HepG2 (cell line): ENCODE measurements at regions of chr20 and their contacts with region 1.

Region 1: GRCh38 chr20:13037727-13038126 is 29.0 kb downstream of the SPTLC3 start:
- DNase-seq: no peak
- ATAC-seq: no peak
- H3K4me3 ChIP-seq: no peak overlapping the region
- H3K27ac ChIP-seq: no peak overlapping the region
- H3K4me1 ChIP-seq: no peaks in the 10 kb centered on the region
- H3K27me3 ChIP-seq: no peaks in the 10 kb centered on the region
- CTCF ChIP-seq: no peak
- EP300 ChIP-seq: no peak
- POLR2A ChIP-seq: no peak
- RAD21 ChIP-seq: no peak

Region 2: DNA sequence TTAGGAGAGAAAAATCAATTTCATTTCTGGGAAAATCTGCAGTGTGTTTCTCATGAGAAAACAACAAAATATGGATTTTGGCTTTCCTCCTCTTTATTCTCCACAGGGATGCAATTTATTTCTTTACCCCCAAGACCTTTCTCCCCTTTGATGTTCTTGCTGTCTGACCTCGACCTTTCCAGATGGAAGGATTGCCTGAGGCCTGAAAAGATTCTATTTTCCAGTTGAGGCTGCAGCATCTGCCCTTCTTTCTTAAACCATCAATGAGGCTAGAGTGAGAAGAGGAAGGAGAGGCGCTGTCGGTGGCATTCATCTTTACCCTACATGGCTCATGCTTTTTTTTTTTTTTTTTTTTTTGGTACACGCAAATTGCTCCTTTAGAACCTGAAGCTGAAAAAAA is 1464.2 kb before region 1 on chr20:
- CTCF ChIA-PET with region 1: no interaction called
- POLR2A ChIA-PET with region 1: no interaction called
- in situ Hi-C with region 1: no loop called
- intact Hi-C with region 1: loop called (anchors 5 kb)
- DNase-seq: no peak
- ATAC-seq: no peak
- H3K4me3 ChIP-seq: no peak overlapping the region
- H3K27ac ChIP-seq: no peak overlapping the region
- H3K4me1 ChIP-seq: no peaks in the 10 kb centered on the region
- H3K27me3 ChIP-seq: no peaks in the 10 kb centered on the region
- CTCF ChIP-seq: no peak
- EP300 ChIP-seq: no peak
- POLR2A ChIP-seq: no peak
- RAD21 ChIP-seq: no peak

Region 3: DNA sequence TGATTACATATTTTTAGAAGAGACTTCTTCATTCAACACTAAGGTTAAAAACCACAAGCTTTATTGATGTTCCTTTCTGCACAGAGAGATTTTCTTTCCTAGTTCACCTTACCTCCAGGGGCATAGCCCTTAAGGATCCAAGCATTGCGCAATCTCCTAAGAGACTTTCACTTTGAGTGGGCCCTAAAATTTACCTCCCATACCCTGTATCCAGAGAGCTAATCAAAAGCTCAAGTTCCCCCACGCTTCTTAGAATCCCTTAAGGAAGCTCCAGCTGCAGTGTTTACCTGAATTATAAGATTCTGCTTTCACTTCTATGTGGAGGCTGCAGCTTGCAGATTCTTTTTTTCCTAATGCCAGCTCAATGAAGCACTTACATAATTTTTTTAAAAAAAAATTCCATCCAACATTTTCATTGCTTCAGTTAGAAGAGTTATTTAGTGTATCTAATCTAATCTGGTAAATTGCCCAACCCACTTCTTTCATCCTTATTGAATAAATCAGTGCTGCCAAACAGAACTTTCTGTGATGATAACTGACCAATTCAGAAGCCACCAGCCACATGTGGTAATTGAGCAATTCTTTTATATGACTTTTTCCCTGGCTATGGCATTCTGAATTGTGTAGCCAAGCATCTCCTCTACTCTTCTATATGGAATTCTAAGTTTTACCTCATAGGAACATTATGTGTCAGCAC is 53.5 kb before region 1 on chr20:
- CTCF ChIA-PET with region 1: no interaction called
- POLR2A ChIA-PET with region 1: no interaction called
- in situ Hi-C with region 1: no loop called
- intact Hi-C with region 1: no loop called
- DNase-seq: no peak
- ATAC-seq: no peak
- H3K4me3 ChIP-seq: no peak overlapping the region
- H3K27ac ChIP-seq: no peak overlapping the region
- H3K4me1 ChIP-seq: peaks cover 12% of the 10 kb centered on the region
- H3K27me3 ChIP-seq: no peaks in the 10 kb centered on the region
- CTCF ChIP-seq: no peak
- EP300 ChIP-seq: no peak
- POLR2A ChIP-seq: no peak
- RAD21 ChIP-seq: no peak

Region 4: GRCh38 chr20:13061381-13061780 is 23.7 kb after region 1 on chr20:
- CTCF ChIA-PET with region 1: no interaction called
- POLR2A ChIA-PET with region 1: interaction called, 5 read pairs
- in situ Hi-C with region 1: no loop called
- intact Hi-C with region 1: loop called (anchors 2 kb)
- DNase-seq: no peak
- ATAC-seq: no peak
- H3K4me3 ChIP-seq: no peak overlapping the region
- H3K27ac ChIP-seq: peak overlapping the region; percentile 5
- H3K4me1 ChIP-seq: peaks cover 54% of the 10 kb centered on the region
- H3K27me3 ChIP-seq: no peaks in the 10 kb centered on the region
- CTCF ChIP-seq: no peak
- EP300 ChIP-seq: no peak
- POLR2A ChIP-seq: no peak
- RAD21 ChIP-seq: no peak

Region 5: DNA sequence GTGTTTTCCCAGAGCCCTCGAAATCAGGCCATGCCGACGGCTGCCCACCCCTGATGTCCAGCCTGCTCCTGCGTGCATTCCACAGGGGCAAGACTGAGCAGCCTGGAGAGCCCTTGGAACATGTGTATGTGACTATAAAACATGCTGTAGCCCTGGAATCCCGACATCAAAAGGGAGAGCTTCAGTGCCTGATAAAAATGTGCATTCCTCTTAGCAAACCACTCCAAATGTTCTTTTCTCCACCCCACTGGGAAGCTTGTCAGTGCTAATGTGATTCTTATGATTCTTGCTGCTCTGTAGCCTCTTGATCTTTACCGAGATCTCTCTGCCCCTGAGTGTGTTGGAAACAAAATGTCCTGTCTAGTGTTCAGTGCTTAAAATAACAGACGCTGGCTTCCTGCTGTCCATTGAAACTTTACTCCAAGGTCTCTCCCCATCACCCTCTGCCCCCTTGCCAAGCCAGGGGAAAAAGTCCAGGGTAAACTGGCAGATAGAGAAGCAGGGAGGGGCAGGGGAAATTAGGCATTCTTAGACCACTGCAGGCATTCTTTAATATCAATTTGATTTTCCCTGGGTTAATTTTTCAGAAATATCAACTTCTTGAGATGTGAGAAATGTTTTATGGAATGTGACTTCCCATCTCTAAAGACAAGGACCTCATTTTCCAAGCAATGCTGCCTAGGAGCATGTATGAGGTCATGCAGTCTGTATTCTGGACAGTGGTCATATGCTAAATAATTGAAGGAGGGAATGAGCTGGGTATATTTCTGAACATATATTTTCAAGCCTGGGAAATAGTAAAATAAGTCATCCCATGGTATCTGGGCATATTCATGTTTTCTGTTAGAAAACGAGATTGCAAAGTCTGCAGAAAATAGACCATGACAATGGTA is 109.6 kb after region 1 on chr20:
- CTCF ChIA-PET with region 1: no interaction called
- POLR2A ChIA-PET with region 1: no interaction called
- in situ Hi-C with region 1: no loop called
- intact Hi-C with region 1: no loop called
- DNase-seq: no peak
- ATAC-seq: no peak
- H3K4me3 ChIP-seq: no peak overlapping the region
- H3K27ac ChIP-seq: no peak overlapping the region
- H3K4me1 ChIP-seq: peaks cover 12% of the 10 kb centered on the region; the same call in 1 of the 2 replicates
- H3K27me3 ChIP-seq: no peaks in the 10 kb centered on the region
- CTCF ChIP-seq: no peak
- EP300 ChIP-seq: no peak
- POLR2A ChIP-seq: no peak
- RAD21 ChIP-seq: no peak